ENCODE measurements at regions of chr2 and their contacts with region 1.

Region 1: DNA sequence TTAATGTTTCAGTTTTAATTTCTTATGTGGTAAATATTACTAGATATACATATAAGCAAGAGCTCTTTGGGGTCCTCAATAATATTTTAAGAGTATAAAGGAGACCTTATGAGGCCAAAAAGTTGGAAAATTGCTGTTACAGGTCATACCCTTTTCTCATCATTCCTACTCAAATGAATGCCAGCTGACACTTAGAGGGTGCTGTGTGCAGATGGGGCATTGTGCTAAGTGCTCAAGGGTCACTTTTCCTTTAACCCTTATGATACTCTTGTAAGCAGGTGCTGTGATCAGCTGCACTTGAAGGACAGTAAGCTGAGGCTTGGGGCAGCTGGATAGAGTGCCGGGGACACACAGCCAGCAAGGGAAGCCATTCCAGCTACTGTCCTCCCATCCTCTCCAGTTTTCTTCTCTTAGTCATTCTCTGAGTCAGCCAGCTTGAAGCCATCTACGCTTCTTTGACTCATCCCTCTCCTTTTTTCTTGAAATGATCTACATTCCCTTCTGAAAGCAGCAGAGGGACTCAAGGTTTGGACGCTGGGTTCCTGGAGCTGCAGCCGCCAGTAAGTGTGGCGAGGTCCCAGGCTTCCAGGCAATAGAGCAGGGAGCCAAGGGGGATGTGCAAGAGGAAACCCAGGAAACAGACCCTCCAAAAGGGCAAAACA is 42.0 kb upstream of the CREB1 start:
- DNase-seq: no peak
- ATAC-seq: peak; percentile 26

Region 2: DNA sequence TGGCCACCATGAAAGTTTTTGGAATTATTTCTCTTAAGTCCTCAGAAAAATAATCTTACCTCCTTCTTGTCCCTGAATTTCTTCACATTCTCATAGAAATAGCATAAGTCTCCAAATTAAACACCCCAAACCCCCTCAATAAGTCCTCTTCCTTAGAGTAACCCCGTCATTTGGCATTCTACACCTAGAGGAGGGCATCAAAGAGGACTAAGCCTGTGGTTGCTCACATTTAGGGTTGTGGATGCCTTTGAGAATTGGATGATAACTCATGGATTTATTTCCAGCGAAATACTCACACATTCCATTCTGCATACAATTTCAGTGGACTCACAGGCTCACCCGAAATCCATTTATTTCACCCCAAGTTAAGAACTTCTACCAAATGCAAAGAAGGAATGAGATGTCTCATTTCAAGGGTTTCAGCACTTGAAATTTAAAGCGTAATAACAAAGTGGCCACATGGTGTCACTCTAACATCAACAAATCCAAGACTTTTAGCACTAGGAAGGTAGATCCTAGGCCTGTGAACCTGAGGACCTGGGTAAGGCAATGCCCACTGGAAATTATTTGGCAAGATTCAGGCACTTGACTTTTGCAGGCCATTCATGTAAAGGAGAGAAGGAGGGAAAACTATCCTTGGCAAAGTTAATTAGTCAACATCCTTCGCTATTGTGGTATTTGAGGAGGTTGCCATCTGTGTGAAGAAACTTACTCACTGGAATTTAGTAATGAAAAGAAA is 794.2 kb before region 1 on chr2:
- intact Hi-C with region 1: loop called (anchors 10 kb)
- DNase-seq: no peak
- ATAC-seq: peak; percentile 61

Region 3: DNA sequence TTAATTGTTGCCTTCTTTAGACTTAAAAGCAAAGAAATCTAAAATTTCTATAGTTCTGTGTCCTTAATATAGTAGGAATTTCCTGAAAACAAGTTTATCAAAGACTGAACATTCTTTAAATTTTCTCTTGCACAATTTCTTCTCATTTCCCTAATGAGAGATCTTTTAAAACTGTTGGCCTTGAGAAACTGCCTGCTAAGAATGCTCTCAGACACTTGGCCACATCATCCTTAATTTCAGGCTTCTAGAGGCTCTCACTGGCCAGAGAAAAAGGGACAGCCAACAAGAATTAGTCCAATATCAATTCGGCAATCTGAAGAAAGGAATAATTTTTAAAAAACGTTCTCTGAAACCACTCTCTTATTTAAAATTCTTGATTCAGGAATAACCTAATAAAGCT is 125.1 kb before region 1 on chr2:
- intact Hi-C with region 1: no loop called
- DNase-seq: no peak
- ATAC-seq: no peak

Region 4: GRCh38 chr2:207706936-207707809 is 219.4 kb after region 1 on chr2:
- intact Hi-C with region 1: no loop called
- DNase-seq: no peak
- ATAC-seq: no peak